T-cell (primary cell): ENCODE measurements at regions of chr10 and their contacts with region 1.

Region 1: DNA sequence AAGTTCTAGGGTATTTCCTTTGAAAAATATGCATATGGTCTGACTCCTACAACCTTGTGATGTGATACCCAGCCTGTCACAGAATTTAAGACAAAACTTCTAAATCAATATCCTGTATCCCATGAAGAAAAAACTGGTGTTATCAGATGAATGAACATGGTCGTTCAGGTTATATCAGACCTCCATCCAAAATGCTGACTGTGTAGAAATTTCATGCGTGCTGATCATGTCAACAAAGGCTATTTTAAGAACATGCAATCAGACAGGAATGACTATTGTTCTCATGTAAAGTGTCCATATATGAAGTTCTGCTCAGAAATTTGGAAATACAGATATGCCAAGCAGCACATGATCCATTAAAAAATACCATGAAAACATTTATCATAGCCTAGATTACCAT is 62.3 kb downstream of the NEBL start:
- DNase-seq: no peak
- ATAC-seq: no peak
- H3K4me3 ChIP-seq: no peak overlapping the region
- H3K4me3 Mint-ChIP-seq: no peak overlapping the region
- H3K27ac ChIP-seq: no peak overlapping the region
- H3K27ac Mint-ChIP-seq: no peak overlapping the region
- H3K4me1 ChIP-seq: no peaks in the 10 kb centered on the region
- H3K4me1 Mint-ChIP-seq: no peaks in the 10 kb centered on the region
- H3K27me3 ChIP-seq: no peaks in the 10 kb centered on the region
- H3K27me3 Mint-ChIP-seq: no peaks in the 10 kb centered on the region

Region 2: DNA sequence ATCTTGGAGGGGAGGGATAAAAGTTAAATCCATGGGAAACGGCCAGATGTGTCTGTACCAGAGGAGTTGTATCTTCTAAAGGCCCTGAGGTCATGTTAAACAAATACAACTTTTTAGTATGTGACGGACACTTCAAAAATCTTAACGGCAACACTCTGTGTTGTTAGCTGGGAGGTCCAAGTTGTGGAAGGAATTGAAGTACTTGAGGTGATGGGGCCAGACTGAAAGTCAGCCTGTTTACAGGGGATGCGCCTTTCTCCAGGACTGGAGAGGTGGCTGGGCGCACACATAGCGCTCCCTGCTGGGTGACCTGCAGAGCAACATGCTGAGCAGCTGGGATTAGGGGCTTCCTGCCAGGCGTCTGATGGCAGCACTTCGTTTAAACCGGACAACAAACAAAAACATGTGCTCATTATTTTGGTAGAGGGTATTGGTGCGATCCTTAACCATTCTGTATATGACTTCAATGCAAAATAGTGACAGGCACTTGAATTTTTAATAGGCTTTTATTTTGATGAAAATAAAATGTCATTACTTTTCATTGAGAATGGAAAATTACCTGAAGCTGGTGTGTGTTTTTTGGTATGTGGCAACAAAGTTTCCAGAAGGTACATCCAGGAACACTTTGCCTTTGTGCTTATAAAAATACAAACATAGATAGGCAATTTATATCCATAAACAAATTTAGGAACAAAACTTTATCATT is 897.4 kb after region 1 on chr10:
- CTCF ChIA-PET with region 1: no interaction called
- POLR2A ChIA-PET with region 1: interaction called in 1 of 2 experiments, 14 read pairs
- DNase-seq: peak in 20 of 35 experiments; percentile 7 to 56 (median 28)
- ATAC-seq: peak; percentile 48 to 67 (median 55)
- H3K4me3 ChIP-seq: no peak overlapping the region
- H3K4me3 Mint-ChIP-seq: no peak overlapping the region
- H3K27ac ChIP-seq: no peak overlapping the region
- H3K27ac Mint-ChIP-seq: peak overlapping the region in 1 of 2 donors; percentile 1
- H3K4me1 ChIP-seq: peaks cover 13 to 16% of the 10 kb centered on the region in 2 experiments
- H3K4me1 Mint-ChIP-seq: peaks cover 34 to 35% (median 34%) of the 10 kb centered on the region in 3 donors
- H3K27me3 ChIP-seq: no peaks in the 10 kb centered on the region
- H3K27me3 Mint-ChIP-seq: no peaks in the 10 kb centered on the region